Panc1 (cell line): ENCODE measurements at regions of chr7 and their contacts with region 1.

Region 1: DNA sequence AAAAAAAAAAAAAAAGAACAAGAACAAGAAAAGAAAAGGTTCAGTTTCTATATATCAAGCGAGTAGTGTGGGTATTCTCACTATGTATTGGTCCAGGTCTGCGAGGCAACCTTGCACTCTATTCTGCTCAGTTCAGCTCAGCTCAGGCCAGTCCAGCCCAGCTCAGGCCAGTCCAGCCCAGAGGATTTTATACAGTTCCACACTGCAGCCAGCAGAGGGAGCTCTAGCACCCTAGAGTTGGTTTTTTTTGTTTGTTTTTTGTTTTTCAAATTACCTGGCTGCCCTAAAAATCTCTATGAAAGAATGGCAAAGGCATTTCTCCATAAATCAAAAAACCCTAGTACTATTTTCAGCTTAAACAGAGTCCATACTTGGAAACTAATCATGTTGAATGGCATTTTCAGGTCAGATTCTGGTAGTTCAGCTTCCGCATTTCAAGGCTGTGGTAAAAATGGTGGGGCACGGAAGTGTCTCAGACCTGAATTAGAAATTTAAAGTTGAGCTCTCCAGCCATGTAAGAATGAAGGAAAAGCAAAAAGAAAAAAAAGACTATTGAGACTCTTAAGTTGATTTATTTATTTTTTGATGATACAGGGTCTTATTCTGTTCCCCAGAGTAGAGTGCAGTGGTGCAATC is 55.2 kb upstream of the GSDME start:
- DNase-seq: peak; percentile 66
- ATAC-seq: peak; percentile 96
- H3K4me3 ChIP-seq: no peak overlapping the region
- H3K27ac ChIP-seq: no peak overlapping the region
- H3K4me1 ChIP-seq: no peaks in the 10 kb centered on the region
- H3K27me3 ChIP-seq: no peaks in the 10 kb centered on the region
- CTCF ChIP-seq: peak; percentile 97

Region 2: GRCh38 chr7:25054819-25055519 is 242.5 kb after region 1 on chr7:
- CTCF ChIA-PET with region 1: interaction called, 12 read pairs
- POLR2A ChIA-PET with region 1: no interaction called
- in situ Hi-C with region 1: no loop called
- intact Hi-C with region 1: no loop called
- DNase-seq: no peak
- ATAC-seq: no peak
- H3K4me3 ChIP-seq: no peak overlapping the region
- H3K27ac ChIP-seq: no peak overlapping the region
- H3K4me1 ChIP-seq: no peaks in the 10 kb centered on the region
- H3K27me3 ChIP-seq: no peaks in the 10 kb centered on the region; the same call in none of the 2 replicates
- CTCF ChIP-seq: no peak

Region 3: GRCh38 chr7:25069900-25070443 is 257.5 kb after region 1 on chr7:
- CTCF ChIA-PET with region 1: interaction called, 25 read pairs
- POLR2A ChIA-PET with region 1: no interaction called
- in situ Hi-C with region 1: no loop called
- intact Hi-C with region 1: loop called (anchors 2 kb)
- DNase-seq: no peak
- ATAC-seq: peak; percentile 79
- H3K4me3 ChIP-seq: peak overlapping the region; percentile 22 to 52
- H3K27ac ChIP-seq: no peak overlapping the region
- H3K4me1 ChIP-seq: no peaks in the 10 kb centered on the region
- H3K27me3 ChIP-seq: no peaks in the 10 kb centered on the region
- CTCF ChIP-seq: peak; percentile 91

Region 4: GRCh38 chr7:25093268-25093826 is 280.9 kb after region 1 on chr7:
- CTCF ChIA-PET with region 1: interaction called, 30 read pairs
- POLR2A ChIA-PET with region 1: no interaction called
- in situ Hi-C with region 1: no loop called
- intact Hi-C with region 1: loop called (anchors 1 kb)
- DNase-seq: peak; percentile 76
- ATAC-seq: peak; percentile 94
- H3K4me3 ChIP-seq: peak overlapping the region; percentile 23 to 53
- H3K27ac ChIP-seq: no peak overlapping the region
- H3K4me1 ChIP-seq: no peaks in the 10 kb centered on the region
- H3K27me3 ChIP-seq: peaks cover 6% of the 10 kb centered on the region; the same call in 1 of the 2 replicates
- CTCF ChIP-seq: peak; percentile 98

Region 5: DNA sequence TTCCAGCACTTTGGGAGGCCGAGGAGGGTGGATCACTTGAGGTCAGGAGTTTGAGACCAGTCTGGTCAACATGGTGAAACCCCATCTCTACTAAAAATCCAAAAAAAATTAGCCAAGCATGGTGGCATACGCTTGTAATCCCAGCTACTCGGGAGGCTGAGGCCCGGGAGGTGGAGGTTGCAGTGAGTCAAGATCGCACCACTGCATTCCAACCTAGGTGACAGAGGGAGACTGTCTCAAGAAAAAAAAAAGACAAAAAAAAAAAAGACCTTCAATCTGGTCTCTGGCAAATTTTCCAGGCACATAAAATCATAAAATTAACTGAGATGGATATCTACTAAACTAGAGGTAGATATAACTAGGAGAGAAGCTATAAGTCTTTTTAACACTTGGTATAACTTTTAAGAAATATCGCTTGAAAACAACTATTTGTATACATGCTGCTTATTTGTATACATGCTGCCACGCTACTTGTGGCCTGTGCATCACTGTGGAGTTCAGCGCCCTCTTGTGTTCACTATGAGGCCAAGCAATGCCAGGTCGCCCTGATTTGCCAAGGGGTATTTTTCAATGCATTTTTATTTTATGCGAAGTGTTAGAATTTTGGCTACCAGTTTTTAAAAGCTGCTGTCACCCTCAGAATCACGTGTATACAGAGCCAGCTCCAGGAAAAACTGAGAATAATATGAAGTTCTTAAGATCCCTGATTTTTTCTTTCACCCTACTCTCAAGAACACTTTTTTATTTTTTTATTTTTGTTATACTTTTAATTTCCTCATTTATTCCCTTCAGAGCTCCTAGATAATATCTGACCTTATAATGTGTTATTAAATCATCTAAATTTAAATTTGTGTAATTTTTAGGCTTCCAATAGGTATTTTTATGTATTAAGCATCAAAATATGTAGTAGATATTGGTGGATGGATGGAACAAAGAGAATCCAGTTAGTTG is 285.9 kb after region 1 on chr7:
- CTCF ChIA-PET with region 1: interaction called, 30 read pairs
- POLR2A ChIA-PET with region 1: no interaction called
- in situ Hi-C with region 1: no loop called
- intact Hi-C with region 1: loop called (anchors 1 kb)
- DNase-seq: no peak
- ATAC-seq: peak; percentile 88
- H3K4me3 ChIP-seq: no peak overlapping the region
- H3K27ac ChIP-seq: no peak overlapping the region
- H3K4me1 ChIP-seq: no peaks in the 10 kb centered on the region
- H3K27me3 ChIP-seq: no peaks in the 10 kb centered on the region
- CTCF ChIP-seq: peak; percentile 98

Region 6: GRCh38 chr7:25240340-25240739 is 427.9 kb after region 1 on chr7:
- CTCF ChIA-PET with region 1: interaction called, 10 read pairs
- POLR2A ChIA-PET with region 1: no interaction called
- in situ Hi-C with region 1: no loop called
- intact Hi-C with region 1: no loop called
- DNase-seq: no peak
- ATAC-seq: no peak
- H3K4me3 ChIP-seq: no peak overlapping the region
- H3K27ac ChIP-seq: no peak overlapping the region
- H3K4me1 ChIP-seq: no peaks in the 10 kb centered on the region
- H3K27me3 ChIP-seq: peaks cover 3% of the 10 kb centered on the region; the same call in 1 of the 2 replicates
- CTCF ChIP-seq: no peak

Region 7: GRCh38 chr7:25940086-25940906 is 1127.9 kb after region 1 on chr7:
- CTCF ChIA-PET with region 1: interaction called, 13 read pairs
- POLR2A ChIA-PET with region 1: no interaction called
- in situ Hi-C with region 1: no loop called
- intact Hi-C with region 1: no loop called
- DNase-seq: no peak
- ATAC-seq: no peak
- H3K4me3 ChIP-seq: no peak overlapping the region
- H3K27ac ChIP-seq: no peak overlapping the region
- H3K4me1 ChIP-seq: no peaks in the 10 kb centered on the region
- H3K27me3 ChIP-seq: peaks cover 18% of the 10 kb centered on the region
- CTCF ChIP-seq: no peak